Activated CD4-positive, alpha-beta T cell treated with anti-CD3 and anti-CD28 coated beads for 36 hours (primary cell): ENCODE measurements at regions of chr3 and their contacts with region 1.

Region 1: DNA sequence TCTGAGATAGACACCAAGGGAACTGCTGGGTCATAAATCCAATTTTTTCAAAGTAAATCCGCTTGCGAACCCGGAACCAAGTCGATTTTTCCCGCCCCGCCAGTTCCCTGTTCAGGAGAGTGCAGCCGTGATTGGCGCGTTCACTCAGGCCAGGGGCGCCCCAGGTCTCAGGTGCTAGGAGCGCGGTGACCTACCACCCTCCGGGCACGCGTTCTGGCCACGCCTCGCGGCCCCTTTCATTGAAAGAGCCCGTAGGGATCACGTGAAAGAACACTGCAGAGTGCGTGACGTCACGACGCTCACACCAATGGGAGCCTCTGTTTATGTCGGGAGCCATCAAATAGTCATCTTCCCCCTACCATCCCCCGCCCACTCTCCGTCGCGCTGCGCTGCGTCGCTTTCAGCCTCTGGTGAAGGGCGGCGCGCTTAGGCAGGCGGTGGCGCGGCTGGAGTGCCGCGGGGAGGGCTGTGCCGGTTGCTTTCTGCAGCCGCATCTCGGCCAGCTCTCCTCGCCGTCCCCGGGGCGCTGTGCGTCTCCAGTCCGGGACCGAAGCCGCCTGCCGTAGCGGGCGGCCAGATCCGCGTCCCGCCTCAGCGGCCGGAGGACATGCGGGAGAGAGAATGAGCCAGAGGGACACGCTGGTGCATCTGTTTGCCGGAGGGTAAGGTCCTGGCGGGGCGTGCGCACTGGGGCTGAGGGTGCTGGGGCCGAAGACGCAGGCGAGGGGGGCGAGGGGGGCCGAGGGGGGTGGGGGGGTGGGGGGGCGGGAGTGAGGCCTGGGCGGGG is at the start of gene SLC25A36:
- DNase-seq: peak; percentile 99
- ATAC-seq: peak; percentile 98
- H3K4me3 Mint-ChIP-seq: peak within 1 kb of the TSS; percentile 93
- H3K27ac Mint-ChIP-seq: peak within 1 kb of the TSS; percentile 95
- H3K4me1 Mint-ChIP-seq: peaks cover 37% of the 10 kb centered on the region
- H3K27me3 Mint-ChIP-seq: no peaks in the 10 kb centered on the region
- total RNA-seq, gene SLC25A36: 42.3 to 62.3 TPM

Region 2: GRCh38 chr3:139343895-139344856 is 1597.5 kb before region 1 on chr3 and contains the start of gene MRPS22:
- CTCF ChIA-PET with region 1: no interaction called
- POLR2A ChIA-PET with region 1: no interaction called
- intact Hi-C with region 1: loop called in 1 of 2 experiments (anchors 5 kb)
- DNase-seq: peak; percentile 90
- ATAC-seq: peak; percentile 97
- H3K4me3 Mint-ChIP-seq: peak within 1 kb of the TSS; percentile 58
- H3K27ac Mint-ChIP-seq: peak within 1 kb of the TSS; percentile 85
- H3K4me1 Mint-ChIP-seq: peaks cover 10% of the 10 kb centered on the region
- H3K27me3 Mint-ChIP-seq: no peaks in the 10 kb centered on the region
- total RNA-seq, gene MRPS22: 72.4 to 80.6 TPM

Region 3: DNA sequence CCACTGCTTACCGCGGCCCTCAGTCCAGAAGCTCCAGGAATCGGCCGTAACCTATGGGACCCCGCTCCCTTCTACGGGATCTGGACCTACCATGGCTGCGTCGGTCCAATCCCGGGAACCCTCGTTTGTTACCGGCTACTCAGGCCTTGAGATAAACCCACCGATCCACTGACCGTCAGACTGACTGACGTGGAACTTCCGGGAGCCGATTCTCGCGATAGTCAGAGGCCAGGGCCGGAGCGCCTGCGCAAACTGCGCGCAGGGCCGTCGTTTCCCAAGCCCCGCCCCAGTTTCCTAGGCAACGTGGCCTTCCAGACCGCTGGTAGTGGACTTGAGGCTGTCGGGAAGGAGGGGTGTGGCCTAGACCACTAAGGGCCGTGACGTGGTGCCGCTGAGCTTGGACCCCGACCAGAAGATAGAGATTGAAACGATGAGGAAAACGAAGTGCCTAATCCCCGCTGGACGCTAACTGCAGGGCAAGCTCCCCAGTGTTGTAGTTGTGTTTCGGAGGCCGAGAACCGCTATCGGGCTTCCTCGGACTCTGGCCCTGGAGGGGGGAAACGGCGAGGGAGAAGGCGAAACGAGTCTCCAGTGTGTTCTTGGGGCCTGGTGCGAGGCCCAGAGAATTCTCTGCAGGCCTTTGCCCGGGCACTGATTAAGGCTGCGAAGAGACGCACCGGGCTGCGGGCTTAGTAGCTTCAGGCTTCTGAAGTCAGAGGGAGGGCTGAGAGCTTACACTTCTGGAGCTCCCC is 1552.0 kb before region 1 on chr3 and contains the start of gene COPB2:
- CTCF ChIA-PET with region 1: no interaction called
- POLR2A ChIA-PET with region 1: no interaction called
- intact Hi-C with region 1: loop called (anchors 1 to 5 kb)
- DNase-seq: peak; percentile 98
- ATAC-seq: peak; percentile 93
- H3K4me3 Mint-ChIP-seq: peak within 1 kb of the TSS; percentile 96
- H3K27ac Mint-ChIP-seq: peak within 1 kb of the TSS; percentile 97
- H3K4me1 Mint-ChIP-seq: peaks cover 38% of the 10 kb centered on the region
- H3K27me3 Mint-ChIP-seq: no peaks in the 10 kb centered on the region
- total RNA-seq, gene COPB2: 90.9 to 99.2 TPM

Region 4: GRCh38 chr3:139677388-139678155 is 1264.1 kb before region 1 on chr3 and contains the start of gene NMNAT3:
- CTCF ChIA-PET with region 1: no interaction called
- POLR2A ChIA-PET with region 1: no interaction called
- intact Hi-C with region 1: loop called in 1 of 2 experiments (anchors 1 kb)
- DNase-seq: peak; percentile 92
- ATAC-seq: peak; percentile 100
- H3K4me3 Mint-ChIP-seq: peak within 1 kb of the TSS; percentile 76
- H3K27ac Mint-ChIP-seq: peak within 1 kb of the TSS; percentile 70
- H3K4me1 Mint-ChIP-seq: peaks cover 11% of the 10 kb centered on the region
- H3K27me3 Mint-ChIP-seq: no peaks in the 10 kb centered on the region
- total RNA-seq, gene NMNAT3: 5.9 to 6.1 TPM

Region 5: GRCh38 chr3:140898340-140899180 is 43.1 kb before region 1 on chr3:
- CTCF ChIA-PET with region 1: interaction called, 5 read pairs
- POLR2A ChIA-PET with region 1: no interaction called
- intact Hi-C with region 1: loop called in 1 of 2 experiments (anchors 1 kb)
- DNase-seq: peak; percentile 11
- ATAC-seq: peak; percentile 66
- H3K4me3 Mint-ChIP-seq: no peak overlapping the region
- H3K27ac Mint-ChIP-seq: no peak overlapping the region
- H3K4me1 Mint-ChIP-seq: no peaks in the 10 kb centered on the region
- H3K27me3 Mint-ChIP-seq: peaks cover 11% of the 10 kb centered on the region

Region 6: DNA sequence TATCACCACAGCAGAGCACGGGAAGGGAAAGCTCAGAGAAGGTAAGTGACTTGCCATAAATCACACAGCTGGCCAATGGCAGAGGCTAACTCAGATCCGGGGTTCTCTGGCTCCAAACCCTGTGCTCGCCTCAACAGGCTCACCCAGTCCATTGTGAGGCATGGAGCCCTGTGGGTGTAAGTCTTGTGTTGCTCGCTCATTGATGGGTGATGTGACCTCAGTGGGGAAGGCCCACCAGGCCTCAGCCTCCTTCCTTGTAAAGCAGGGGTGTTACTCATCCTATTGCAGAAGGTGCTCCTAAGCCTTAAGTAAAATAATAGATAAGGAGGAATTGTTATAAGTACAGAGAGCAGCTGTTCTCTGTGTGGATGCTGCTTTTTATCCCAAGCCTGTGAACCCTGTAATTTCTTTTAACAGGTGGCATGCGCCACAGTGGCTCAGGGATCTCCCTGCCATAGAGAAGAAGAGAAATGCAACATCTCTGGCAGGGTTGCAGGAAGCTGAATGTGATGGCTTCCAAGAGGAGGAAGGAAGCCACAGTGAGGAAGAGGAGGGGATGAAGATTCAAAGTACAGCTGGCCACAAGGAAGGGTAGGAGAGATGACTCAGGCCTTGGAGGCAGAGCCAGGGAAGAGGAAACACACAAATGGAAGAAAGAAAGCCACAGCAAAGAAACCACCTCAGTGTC is 78.7 kb after region 1 on chr3:
- CTCF ChIA-PET with region 1: no interaction called
- POLR2A ChIA-PET with region 1: no interaction called
- intact Hi-C with region 1: no loop called
- DNase-seq: peak; percentile 27
- ATAC-seq: peak; percentile 81
- H3K4me3 Mint-ChIP-seq: no peak overlapping the region
- H3K27ac Mint-ChIP-seq: no peak overlapping the region
- H3K4me1 Mint-ChIP-seq: peaks cover 8% of the 10 kb centered on the region
- H3K27me3 Mint-ChIP-seq: peaks cover 2% of the 10 kb centered on the region

Region 7: DNA sequence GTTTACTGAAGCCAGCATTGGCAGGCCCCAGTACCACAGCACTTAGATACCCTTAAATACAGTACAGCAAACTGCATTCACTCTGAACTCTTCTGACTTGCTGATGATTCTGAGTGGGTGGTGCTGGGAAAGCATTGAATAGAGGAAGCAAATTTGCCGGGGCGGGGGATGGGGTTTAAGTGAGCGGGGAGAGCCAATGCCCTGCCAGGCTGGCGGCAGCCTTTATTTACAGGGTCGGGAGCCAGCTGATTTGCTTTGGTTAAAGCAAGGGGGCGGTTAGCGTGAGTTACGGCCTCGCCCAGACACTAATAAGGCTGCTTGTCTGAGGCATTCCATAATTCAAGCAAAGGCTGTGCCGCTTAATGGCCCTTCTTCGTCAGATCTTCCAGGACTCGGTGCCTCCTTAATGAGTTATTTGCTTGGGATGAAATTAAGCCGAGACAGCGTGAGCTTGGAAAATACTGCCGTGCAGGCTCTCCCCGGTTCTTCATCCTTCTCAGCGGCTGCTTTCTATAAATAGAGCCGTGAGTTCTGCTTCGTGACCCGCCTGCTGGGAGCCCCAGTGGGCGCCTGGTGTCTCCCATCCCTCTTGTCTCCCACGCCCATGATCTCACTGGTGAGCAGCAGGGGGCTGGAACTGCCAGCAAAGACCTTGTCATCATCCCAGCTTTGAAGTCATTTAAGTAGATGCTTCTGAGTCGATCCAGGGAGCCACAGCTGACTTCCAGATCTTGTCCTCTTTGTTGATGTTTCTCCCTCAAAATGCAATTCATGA is 135.4 kb after region 1 on chr3:
- CTCF ChIA-PET with region 1: no interaction called
- POLR2A ChIA-PET with region 1: no interaction called
- intact Hi-C with region 1: no loop called
- DNase-seq: peak; percentile 61
- ATAC-seq: peak; percentile 74
- H3K4me3 Mint-ChIP-seq: peak overlapping the region; percentile 13
- H3K27ac Mint-ChIP-seq: peak overlapping the region; percentile 33
- H3K4me1 Mint-ChIP-seq: peaks cover 11% of the 10 kb centered on the region
- H3K27me3 Mint-ChIP-seq: no peaks in the 10 kb centered on the region

Region 8: GRCh38 chr3:141402476-141403171 is 461.0 kb after region 1 on chr3:
- CTCF ChIA-PET with region 1: no interaction called
- POLR2A ChIA-PET with region 1: no interaction called
- intact Hi-C with region 1: loop called in 1 of 2 experiments (anchors 10 kb)
- DNase-seq: peak; percentile 65
- ATAC-seq: peak; percentile 66
- H3K4me3 Mint-ChIP-seq: peak overlapping the region; percentile 84
- H3K27ac Mint-ChIP-seq: peak overlapping the region; percentile 88
- H3K4me1 Mint-ChIP-seq: peaks cover 60% of the 10 kb centered on the region
- H3K27me3 Mint-ChIP-seq: no peaks in the 10 kb centered on the region

Region 9: DNA sequence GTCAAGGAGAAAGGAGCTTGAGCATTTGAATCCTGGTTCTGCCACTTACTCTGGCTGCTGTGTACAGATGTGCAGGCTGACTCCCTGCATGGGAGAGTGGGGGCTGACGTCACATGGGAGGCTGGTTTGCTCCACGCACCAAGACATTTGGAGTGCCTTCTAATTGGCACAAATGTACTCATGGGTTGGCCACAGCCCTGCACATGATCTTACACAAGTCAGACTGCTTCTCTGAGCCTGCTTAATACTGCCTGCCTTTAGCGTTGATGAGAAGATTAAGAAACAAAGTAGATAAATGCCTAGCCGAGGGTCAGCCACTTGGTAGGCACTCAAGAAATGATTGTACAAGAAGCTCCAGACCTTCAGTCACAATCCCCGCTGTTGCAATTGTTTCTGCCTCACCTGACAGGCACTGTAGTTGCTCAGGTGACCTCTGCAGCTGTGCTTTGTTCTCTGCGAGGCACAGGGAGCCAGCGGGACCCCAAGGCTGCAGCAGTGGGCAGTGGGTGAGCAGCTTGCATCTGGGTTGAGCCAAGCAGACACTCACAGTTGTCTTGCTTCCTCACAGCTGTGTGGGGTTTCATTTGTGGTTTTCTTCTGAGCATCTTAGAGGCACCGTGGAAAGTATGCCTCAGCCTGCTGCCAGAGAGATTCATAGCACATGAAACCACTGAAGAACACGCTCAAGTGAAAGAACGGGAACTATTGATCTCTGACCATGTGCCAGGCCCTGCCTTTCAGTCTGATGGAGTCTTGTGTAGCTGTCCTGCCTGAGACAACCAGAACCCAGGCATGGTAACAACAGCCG is 854.7 kb after region 1 on chr3:
- CTCF ChIA-PET with region 1: no interaction called
- POLR2A ChIA-PET with region 1: no interaction called
- intact Hi-C with region 1: loop called in 1 of 2 experiments (anchors 2 kb)
- DNase-seq: peak; percentile 90
- ATAC-seq: peak; percentile 84
- H3K4me3 Mint-ChIP-seq: peak overlapping the region; percentile 77
- H3K27ac Mint-ChIP-seq: peak overlapping the region; percentile 97
- H3K4me1 Mint-ChIP-seq: peaks cover 52% of the 10 kb centered on the region
- H3K27me3 Mint-ChIP-seq: no peaks in the 10 kb centered on the region